ENCODE measurements at regions of chr13 and their contacts with region 1.

Region 1: DNA sequence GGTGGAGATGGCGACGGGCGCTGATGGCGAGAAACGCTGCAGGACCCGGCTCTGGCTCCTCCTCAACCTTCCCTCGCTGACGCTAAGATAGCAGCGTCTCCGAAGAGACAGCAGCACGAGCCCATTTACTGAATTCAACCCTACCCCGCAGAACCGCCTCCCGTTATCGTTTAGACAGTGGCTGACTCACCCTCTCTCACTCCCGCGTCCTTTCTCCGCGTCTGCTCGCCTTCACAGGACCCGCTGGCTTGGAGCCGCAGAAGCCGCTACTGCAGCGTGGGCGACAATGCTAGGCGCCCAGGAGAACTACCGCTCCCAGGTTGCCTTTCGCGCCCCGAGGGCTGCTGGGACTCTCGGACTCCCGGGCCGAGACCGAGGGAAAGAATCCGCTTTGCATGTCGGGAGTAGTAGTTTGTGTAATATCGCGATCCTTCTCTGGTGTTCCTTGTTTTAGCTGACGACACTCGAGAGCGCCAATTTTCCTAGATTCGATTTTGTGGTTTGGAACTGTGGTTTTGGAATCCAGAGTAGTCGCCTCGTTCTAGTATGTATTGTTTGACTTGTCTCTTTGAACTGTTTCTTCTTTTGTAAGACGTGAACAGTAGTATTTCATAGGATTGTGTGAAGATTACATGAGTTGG is at the start of gene KBTBD6:
- DNase-seq: peak; percentile 98
- ATAC-seq: peak; percentile 95
- H3K4me3 Mint-ChIP-seq: peak within 1 kb of the TSS; percentile 92
- H3K27ac Mint-ChIP-seq: peak within 1 kb of the TSS; percentile 93
- H3K4me1 Mint-ChIP-seq: peaks cover 46% of the 10 kb centered on the region
- H3K27me3 Mint-ChIP-seq: no peaks in the 10 kb centered on the region
- total RNA-seq, gene KBTBD6: 3.4 to 4.4 TPM

Region 2: GRCh38 chr13:40770934-40771618 is 361.6 kb before region 1 on chr13 and contains the start of gene MRPS31:
- CTCF ChIA-PET with region 1: no interaction called
- POLR2A ChIA-PET with region 1: interaction called, 4 read pairs
- intact Hi-C with region 1: loop called in 1 of 2 experiments (anchors 5 kb)
- DNase-seq: peak; percentile 97
- ATAC-seq: peak; percentile 99
- H3K4me3 Mint-ChIP-seq: peak within 1 kb of the TSS; percentile 89
- H3K27ac Mint-ChIP-seq: peak within 1 kb of the TSS; percentile 97
- H3K4me1 Mint-ChIP-seq: peaks cover 30% of the 10 kb centered on the region
- H3K27me3 Mint-ChIP-seq: no peaks in the 10 kb centered on the region
- total RNA-seq, gene MRPS31: 45.8 to 46.1 TPM

Region 3: GRCh38 chr13:41085961-41086585 is 46.6 kb before region 1 on chr13:
- CTCF ChIA-PET with region 1: interaction called, 3 read pairs
- POLR2A ChIA-PET with region 1: no interaction called
- intact Hi-C with region 1: loop called in 1 of 2 experiments (anchors 5 kb)
- DNase-seq: no peak
- ATAC-seq: no peak
- H3K4me3 Mint-ChIP-seq: no peak overlapping the region
- H3K27ac Mint-ChIP-seq: no peak overlapping the region
- H3K4me1 Mint-ChIP-seq: no peaks in the 10 kb centered on the region
- H3K27me3 Mint-ChIP-seq: no peaks in the 10 kb centered on the region

Region 4: GRCh38 chr13:41193919-41194824 is 61.5 kb after region 1 on chr13 and contains the start of gene KBTBD7:
- CTCF ChIA-PET with region 1: interaction called, 3 read pairs
- POLR2A ChIA-PET with region 1: no interaction called
- intact Hi-C with region 1: loop called (anchors 1 kb)
- DNase-seq: peak; percentile 98
- ATAC-seq: peak; percentile 96
- H3K4me3 Mint-ChIP-seq: peak within 1 kb of the TSS; percentile 83
- H3K27ac Mint-ChIP-seq: peak within 1 kb of the TSS; percentile 98
- H3K4me1 Mint-ChIP-seq: peaks cover 50% of the 10 kb centered on the region
- H3K27me3 Mint-ChIP-seq: no peaks in the 10 kb centered on the region
- total RNA-seq, gene KBTBD7: 3.7 to 4.5 TPM

Region 5: DNA sequence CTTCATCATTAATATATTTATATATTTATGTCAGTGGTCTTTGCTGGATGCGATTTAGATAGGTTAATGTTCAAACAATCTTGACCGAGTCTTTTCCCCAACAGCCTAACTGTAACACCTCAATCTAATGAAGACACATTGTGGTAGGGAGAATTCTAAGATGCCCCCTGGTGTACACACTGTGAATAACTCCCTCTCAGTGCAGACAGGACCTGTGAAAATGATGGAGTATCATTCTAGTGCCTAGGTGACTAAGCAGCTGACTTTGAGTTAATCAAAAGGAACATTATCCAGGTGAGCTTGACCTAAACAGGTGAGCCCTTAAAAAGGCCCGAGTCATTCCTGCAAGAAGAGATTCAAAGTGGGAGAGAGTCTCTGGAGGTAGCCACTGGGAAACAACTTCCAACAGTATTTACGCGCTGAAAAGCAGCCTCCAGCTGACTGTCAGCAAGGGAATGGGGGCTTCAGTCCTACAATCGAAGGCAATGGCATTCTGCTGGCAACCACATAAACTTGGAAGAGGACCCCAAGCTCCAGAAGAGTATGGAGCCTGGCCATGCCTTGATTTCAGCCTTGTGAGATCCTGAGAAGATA is 89.7 kb after region 1 on chr13:
- CTCF ChIA-PET with region 1: interaction called, 4 read pairs
- POLR2A ChIA-PET with region 1: no interaction called
- intact Hi-C with region 1: loop called (anchors 1 kb)
- DNase-seq: peak; percentile 66
- ATAC-seq: peak; percentile 97
- H3K4me3 Mint-ChIP-seq: no peak overlapping the region
- H3K27ac Mint-ChIP-seq: no peak overlapping the region
- H3K4me1 Mint-ChIP-seq: no peaks in the 10 kb centered on the region
- H3K27me3 Mint-ChIP-seq: no peaks in the 10 kb centered on the region

Region 6: GRCh38 chr13:41263261-41264027 is 130.8 kb after region 1 on chr13 and contains the start of gene MTRF1:
- CTCF ChIA-PET with region 1: no interaction called
- POLR2A ChIA-PET with region 1: no interaction called
- intact Hi-C with region 1: loop called (anchors 1 kb)
- DNase-seq: peak; percentile 89
- ATAC-seq: peak; percentile 93
- H3K4me3 Mint-ChIP-seq: peak within 1 kb of the TSS; percentile 80
- H3K27ac Mint-ChIP-seq: peak within 1 kb of the TSS; percentile 95
- H3K4me1 Mint-ChIP-seq: peaks cover 12% of the 10 kb centered on the region
- H3K27me3 Mint-ChIP-seq: no peaks in the 10 kb centered on the region
- total RNA-seq, gene MTRF1: 19.7 to 22.1 TPM

Measured in activated CD4-positive, alpha-beta T cell treated with anti-CD3 and anti-CD28 coated beads for 36 hours (primary cell).